A673 (cell line): ENCODE measurements at regions of chr19 and their contacts with region 1.

Region 1: DNA sequence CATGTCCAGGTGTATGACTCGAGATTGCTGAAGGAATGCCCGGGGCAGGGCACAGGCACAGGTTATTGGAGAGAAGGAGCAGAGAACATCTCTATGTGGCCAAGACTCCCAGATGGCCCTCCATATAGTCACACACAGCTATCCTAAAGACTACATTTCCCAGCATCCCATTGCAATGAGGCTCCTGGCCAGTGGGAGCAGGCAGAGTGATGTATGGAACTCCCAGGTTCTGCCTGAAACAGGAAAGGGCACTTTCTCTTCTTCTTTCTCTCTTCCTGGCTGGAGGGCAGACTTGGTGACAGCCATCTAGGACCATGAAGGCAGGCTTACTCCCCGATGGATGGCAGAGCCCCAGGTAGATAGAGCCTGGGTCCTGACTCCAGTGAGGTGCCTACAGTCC is 13.5 kb downstream of the PPP1R13L start:
- DNase-seq: peak; percentile 49
- H3K4me3 ChIP-seq: no peak overlapping the region
- H3K27ac ChIP-seq: no peak overlapping the region
- H3K4me1 ChIP-seq: no peaks in the 10 kb centered on the region
- H3K27me3 ChIP-seq: peaks cover under 1% of the 10 kb centered on the region
- CTCF ChIP-seq: no peak

Region 2: DNA sequence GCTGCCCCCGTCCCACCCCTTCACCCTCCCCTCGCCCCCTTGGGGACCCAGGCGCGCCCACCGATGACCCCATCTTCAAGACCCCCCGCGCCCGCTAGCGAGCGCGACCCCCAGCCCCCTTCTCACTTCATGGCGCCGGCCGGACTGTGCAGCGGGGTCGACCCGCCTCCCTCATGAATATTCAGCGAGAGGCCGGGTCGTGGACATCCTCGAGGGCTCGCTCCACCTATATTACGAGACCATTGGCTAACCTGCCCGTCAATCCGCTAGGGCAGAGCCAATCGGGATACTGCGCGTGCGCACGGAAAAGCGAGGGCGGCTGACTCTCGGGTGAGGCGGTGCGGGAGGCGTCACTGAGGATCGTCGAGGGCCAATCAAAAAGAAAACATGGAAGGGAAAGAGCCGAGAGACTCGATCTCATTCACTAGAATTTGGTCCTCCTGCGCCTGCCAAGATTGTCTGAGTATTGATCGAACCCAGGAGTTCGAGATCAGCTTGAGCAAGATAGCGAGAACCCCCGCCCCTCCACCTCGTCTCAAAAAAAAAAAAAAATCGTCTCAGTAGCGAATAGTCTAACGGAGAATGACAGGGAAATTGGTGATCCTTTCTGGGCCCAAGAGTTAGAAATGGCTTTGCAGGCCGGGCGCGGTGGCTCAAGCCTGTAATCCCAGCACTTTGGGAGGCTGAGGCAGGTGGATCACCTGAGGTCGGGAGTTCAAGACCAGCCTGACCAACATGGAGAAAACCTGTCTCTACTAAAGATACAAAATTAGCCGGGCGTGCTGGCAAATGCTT is 20.7 kb before region 1 on chr19 and contains the start of gene ERCC2:
- CTCF ChIA-PET with region 1: no interaction called
- POLR2A ChIA-PET with region 1: interaction called, 14 read pairs
- intact Hi-C with region 1: no loop called
- DNase-seq: peak; percentile 99
- H3K4me3 ChIP-seq: peak within 1 kb of the TSS; percentile 78
- H3K27ac ChIP-seq: peak within 1 kb of the TSS; percentile 78
- H3K4me1 ChIP-seq: peaks cover 4% of the 10 kb centered on the region
- H3K27me3 ChIP-seq: no peaks in the 10 kb centered on the region
- CTCF ChIP-seq: no peak
- total RNA-seq, gene ERCC2: 51.6 and 59.2 TPM in 2 replicates